A549 (cell line): ENCODE measurements at regions of chr12 and their contacts with region 1.

Region 1: GRCh38 chr12:54324617-54325441 is at the start of gene COPZ1:
- DNase-seq: peak; percentile 98 to 100
- ATAC-seq: peak; percentile 97 to 98
- H3K4me3 ChIP-seq: peak within 1 kb of the TSS; percentile 74
- H3K27ac ChIP-seq: peak within 1 kb of the TSS; percentile 85 to 91
- H3K4me1 ChIP-seq: peaks cover 40% of the 10 kb centered on the region
- CTCF ChIP-seq: peak; percentile 96
- EP300 ChIP-seq: no peak
- POLR2A ChIP-seq: peak; percentile 87
- RAD21 ChIP-seq: peak; percentile 79 to 81
- polyA plus RNA-seq, gene COPZ1: 590 and 613 TPM in 2 replicates

Region 2: GRCh38 chr12:54251667-54252284 is 73.1 kb before region 1 on chr12:
- CTCF ChIA-PET with region 1: interaction called, 19 read pairs
- POLR2A ChIA-PET with region 1: interaction called, 3 read pairs
- DNase-seq: peak; percentile 51 to 69
- ATAC-seq: peak; percentile 73 to 86
- H3K4me3 ChIP-seq: no peak overlapping the region
- H3K27ac ChIP-seq: no peak overlapping the region
- H3K4me1 ChIP-seq: no peaks in the 10 kb centered on the region
- CTCF ChIP-seq: peak; percentile 80
- EP300 ChIP-seq: no peak
- POLR2A ChIP-seq: no peak
- RAD21 ChIP-seq: peak; percentile 64 to 65

Region 3: GRCh38 chr12:54285150-54286041 is 39.4 kb before region 1 on chr12:
- CTCF ChIA-PET with region 1: interaction called, 86 read pairs
- POLR2A ChIA-PET with region 1: interaction called, 40 read pairs
- DNase-seq: no peak
- ATAC-seq: no peak
- H3K4me3 ChIP-seq: peak overlapping the region; percentile 33
- H3K27ac ChIP-seq: no peak overlapping the region
- H3K4me1 ChIP-seq: peaks cover 39% of the 10 kb centered on the region
- CTCF ChIP-seq: peak; percentile 27
- EP300 ChIP-seq: no peak
- POLR2A ChIP-seq: no peak
- RAD21 ChIP-seq: no peak

Region 4: DNA sequence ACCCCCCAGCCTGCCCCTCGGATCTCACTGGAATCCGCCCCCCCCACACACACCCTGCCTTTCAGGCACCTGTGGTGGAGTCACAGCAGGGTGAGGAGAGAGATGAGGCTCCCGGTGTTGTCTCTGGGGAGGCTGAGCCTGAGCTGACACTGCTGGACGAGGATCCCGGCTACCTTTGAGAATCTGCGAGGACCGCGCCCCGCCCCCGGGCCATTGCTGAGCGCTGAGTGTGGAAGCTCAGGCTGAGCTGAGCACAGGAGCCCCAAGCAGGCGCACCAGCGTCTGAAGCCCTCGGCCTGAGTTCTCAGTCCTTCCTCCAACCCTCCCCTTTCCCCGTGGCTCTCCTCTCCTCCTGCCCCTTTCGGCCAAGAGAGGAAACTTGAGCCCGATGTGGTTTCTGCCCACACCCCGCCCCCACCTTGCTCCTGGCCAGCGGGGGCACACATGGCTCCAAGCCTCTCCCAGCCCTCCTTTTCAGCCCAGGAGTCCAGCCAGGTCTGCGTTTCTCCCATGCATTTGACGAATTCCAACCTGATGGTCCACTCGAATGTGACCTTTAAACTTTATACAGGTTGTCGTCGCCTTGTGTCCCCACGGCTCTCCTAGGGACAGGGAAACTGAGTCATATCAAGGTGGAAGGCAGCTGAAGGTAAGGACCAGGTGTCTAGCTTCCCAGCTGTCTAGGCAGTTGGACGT is 23.9 kb before region 1 on chr12 and contains the start of gene NFE2:
- CTCF ChIA-PET with region 1: interaction called, 86 read pairs
- POLR2A ChIA-PET with region 1: interaction called, 13 read pairs
- DNase-seq: peak; percentile 63 to 66
- ATAC-seq: peak; percentile 86 to 92
- H3K4me3 ChIP-seq: peak within 1 kb of the TSS; percentile 29
- H3K27ac ChIP-seq: peak within 1 kb of the TSS; percentile 34 to 81; a peak in 5 of 6 replicates
- H3K4me1 ChIP-seq: peaks cover 32% of the 10 kb centered on the region
- CTCF ChIP-seq: no peak
- EP300 ChIP-seq: no peak
- POLR2A ChIP-seq: no peak
- RAD21 ChIP-seq: no peak
- polyA plus RNA-seq, gene NFE2: 0.52 and 0.90 TPM in 2 replicates

Region 5: DNA sequence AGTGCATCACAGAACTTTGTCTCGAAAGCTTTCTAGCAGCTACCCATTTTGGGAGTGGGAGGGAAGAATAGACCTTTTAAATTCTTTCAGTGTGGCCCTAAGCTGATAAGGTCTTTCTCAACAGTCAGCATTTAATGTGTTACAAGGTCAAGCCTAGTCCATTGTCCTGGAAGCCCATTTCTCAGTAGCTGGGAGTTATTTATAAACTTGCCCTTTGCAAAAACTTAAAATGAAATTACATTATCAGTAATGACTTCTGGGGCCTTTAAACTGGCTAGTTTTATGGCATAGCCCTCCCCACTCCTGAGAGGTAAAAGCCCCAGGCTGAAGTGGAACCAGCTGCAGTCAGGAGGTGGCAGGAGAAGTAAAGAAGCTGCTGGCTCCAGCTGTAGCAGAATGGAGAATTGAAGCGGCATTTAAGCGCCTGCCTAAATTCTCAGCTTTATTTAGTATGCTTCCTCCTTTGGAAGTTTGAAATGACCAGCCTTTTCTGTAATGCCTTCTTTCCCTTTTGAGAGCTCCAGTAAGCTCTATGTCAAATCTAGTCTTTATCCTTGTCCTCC is 12.5 kb after region 1 on chr12:
- CTCF ChIA-PET with region 1: interaction called, 100 read pairs
- POLR2A ChIA-PET with region 1: interaction called, 10 read pairs
- DNase-seq: no peak
- ATAC-seq: no peak
- H3K4me3 ChIP-seq: no peak overlapping the region
- H3K27ac ChIP-seq: no peak overlapping the region
- H3K4me1 ChIP-seq: 0 out of 3 replicates have a peak, but pooled peaks cover 2% of the 10 kb centered on the region
- CTCF ChIP-seq: no peak
- EP300 ChIP-seq: no peak
- POLR2A ChIP-seq: no peak
- RAD21 ChIP-seq: no peak

Region 6: GRCh38 chr12:54509617-54510016 is 184.8 kb after region 1 on chr12:
- CTCF ChIA-PET with region 1: no interaction called
- POLR2A ChIA-PET with region 1: no interaction called
- DNase-seq: no peak
- ATAC-seq: no peak
- H3K4me3 ChIP-seq: no peak overlapping the region
- H3K27ac ChIP-seq: no peak overlapping the region
- H3K4me1 ChIP-seq: no peaks in the 10 kb centered on the region
- CTCF ChIP-seq: no peak
- EP300 ChIP-seq: no peak
- POLR2A ChIP-seq: no peak
- RAD21 ChIP-seq: no peak

Region 7: GRCh38 chr12:54526812-54527630 is 202.2 kb after region 1 on chr12:
- CTCF ChIA-PET with region 1: no interaction called
- POLR2A ChIA-PET with region 1: no interaction called
- DNase-seq: peak in 1 of 2 experiments; percentile 43
- ATAC-seq: peak; percentile 36 to 90; a peak in 4 of 6 replicates
- H3K4me3 ChIP-seq: no peak overlapping the region
- H3K27ac ChIP-seq: no peak overlapping the region
- H3K4me1 ChIP-seq: no peaks in the 10 kb centered on the region
- CTCF ChIP-seq: peak; percentile 52
- EP300 ChIP-seq: no peak
- POLR2A ChIP-seq: no peak
- RAD21 ChIP-seq: peak; percentile 50 to 70; a peak in 4 of 5 replicates